ENCODE measurements at regions of chr16 and their contacts with region 1.

Region 1: GRCh38 chr16:69123910-69124309 is 8.5 kb downstream of the CHTF8 start:
- DNase-seq: no peak
- ATAC-seq: peak; percentile 83
- H3K4me3 ChIP-seq: no peak overlapping the region
- H3K27ac ChIP-seq: no peak overlapping the region
- H3K4me1 ChIP-seq: no peaks in the 10 kb centered on the region; the same call in 1 of the 2 replicates
- H3K27me3 ChIP-seq: no peaks in the 10 kb centered on the region
- CTCF ChIP-seq: peak; percentile 56 to 69 (median 57); a peak in 5 of 6 replicates
- EP300 ChIP-seq: no peak
- POLR2A ChIP-seq: no peak
- RAD21 ChIP-seq: peak; percentile 80

Region 2: DNA sequence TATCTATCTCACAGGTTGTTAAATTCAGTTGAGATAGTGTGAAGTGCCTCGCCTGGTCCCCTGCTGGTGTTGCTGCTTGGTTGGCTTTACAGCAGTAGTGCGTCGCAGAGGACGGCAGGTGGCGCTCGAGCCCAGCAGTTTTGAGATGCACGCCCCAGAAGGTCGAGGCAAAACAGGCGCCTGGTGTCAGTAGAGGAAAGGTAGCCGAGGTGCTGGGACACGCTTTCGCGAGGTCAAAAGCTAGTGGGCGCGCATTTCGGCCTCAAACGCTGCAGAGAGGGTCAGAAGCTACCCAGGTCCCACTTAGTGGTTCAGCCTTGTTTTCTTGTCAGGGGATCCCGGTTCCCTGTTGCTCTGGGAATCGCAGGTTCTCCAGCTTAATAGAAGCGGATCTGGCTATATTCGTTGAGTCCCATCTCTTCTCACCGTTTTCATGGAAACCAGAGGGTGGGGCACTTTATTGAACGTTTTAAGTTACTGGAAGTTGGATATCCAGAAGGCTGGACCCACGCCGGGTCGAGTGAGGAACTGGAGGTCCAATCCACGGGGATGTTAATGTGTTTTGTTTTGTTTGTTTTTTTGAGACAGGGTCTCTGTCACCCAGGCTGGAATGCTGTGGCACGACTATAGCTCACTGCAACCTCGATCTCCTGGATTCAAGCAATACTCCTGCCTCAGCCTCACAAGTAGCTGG is 595.1 kb before region 1 on chr16:
- CTCF ChIA-PET with region 1: interaction called, 33 read pairs
- POLR2A ChIA-PET with region 1: no interaction called
- RAD21 ChIA-PET with region 1: interaction called, 8 read pairs
- SMC1A ChIA-PET with region 1: interaction called, 3 read pairs
- in situ Hi-C with region 1: loop called (anchors 5 kb)
- intact Hi-C with region 1: loop called (anchors 2 kb)
- DNase-seq: peak; percentile 39
- ATAC-seq: peak; percentile 90
- H3K4me3 ChIP-seq: no peak overlapping the region
- H3K27ac ChIP-seq: no peak overlapping the region
- H3K4me1 ChIP-seq: peaks cover 7% of the 10 kb centered on the region
- H3K27me3 ChIP-seq: no peaks in the 10 kb centered on the region
- CTCF ChIP-seq: peak; percentile 95 to 98 (median 96); a peak in 5 of 6 replicates
- EP300 ChIP-seq: no peak
- POLR2A ChIP-seq: no peak
- RAD21 ChIP-seq: peak; percentile 96

Region 3: GRCh38 chr16:68843482-68844210 is 280.3 kb before region 1 on chr16 and contains the start of gene TANGO6:
- CTCF ChIA-PET with region 1: interaction called, 55 read pairs
- POLR2A ChIA-PET with region 1: interaction called, 7 read pairs
- RAD21 ChIA-PET with region 1: interaction called, 26 read pairs
- SMC1A ChIA-PET with region 1: interaction called, 20 read pairs
- in situ Hi-C with region 1: loop called (anchors 5 kb)
- intact Hi-C with region 1: loop called (anchors 5 kb)
- DNase-seq: peak; percentile 41
- ATAC-seq: peak; percentile 95
- H3K4me3 ChIP-seq: peak within 1 kb of the TSS; percentile 88
- H3K27ac ChIP-seq: peak within 1 kb of the TSS; percentile 91
- H3K4me1 ChIP-seq: peaks cover 9% of the 10 kb centered on the region
- H3K27me3 ChIP-seq: no peaks in the 10 kb centered on the region
- CTCF ChIP-seq: peak; percentile 36 to 43 (median 38); a peak in 4 of 6 replicates
- EP300 ChIP-seq: no peak
- POLR2A ChIP-seq: peak; percentile 97
- RAD21 ChIP-seq: no peak
- polyA plus RNA-seq, gene TANGO6: 1.1 to 2.0 TPM

Region 4: DNA sequence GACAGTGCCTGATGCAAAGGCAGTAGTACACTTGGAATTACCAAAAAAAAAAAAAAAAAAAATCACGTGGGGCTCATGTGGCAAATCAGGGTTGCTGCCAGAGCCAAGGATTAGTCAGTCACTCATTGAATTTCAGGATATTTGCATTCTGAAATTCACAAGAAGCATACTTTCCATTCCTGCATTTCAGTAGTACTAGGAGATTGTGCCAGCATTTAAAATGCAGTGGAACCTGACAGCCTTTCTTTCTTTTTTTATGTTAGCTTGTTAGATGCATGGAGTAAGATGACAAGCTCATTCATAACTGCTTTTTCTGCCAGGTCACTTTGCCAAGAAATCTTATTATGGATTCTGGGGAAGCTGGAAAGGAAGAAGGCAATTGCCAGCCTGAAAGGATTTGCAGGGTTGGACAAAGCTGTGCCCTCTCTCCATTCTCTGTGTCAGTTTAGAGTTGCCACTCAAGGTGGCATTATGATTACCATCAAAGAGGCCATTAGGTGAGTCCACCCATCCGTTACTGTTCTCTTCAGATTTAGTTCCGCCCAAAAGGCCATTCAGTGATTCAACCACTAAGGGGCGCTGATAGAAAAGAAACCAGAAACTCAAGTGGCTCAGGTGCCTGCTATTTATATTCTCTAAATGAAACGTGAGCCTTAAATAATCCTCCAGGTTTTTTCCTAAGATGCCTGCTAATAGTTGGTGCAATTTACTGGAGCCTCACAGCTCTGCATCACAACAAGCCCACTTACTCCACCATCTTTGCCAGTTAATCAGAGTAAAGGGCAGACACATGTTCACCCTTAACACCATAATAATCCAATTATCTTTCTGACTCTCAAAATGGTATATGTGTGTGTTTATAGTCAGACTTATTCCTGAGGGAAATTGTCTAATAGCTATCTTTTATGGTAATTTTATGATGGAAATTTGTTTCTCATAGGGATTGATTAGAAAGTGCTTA is 221.6 kb before region 1 on chr16:
- CTCF ChIA-PET with region 1: interaction called, 43 read pairs
- POLR2A ChIA-PET with region 1: interaction called, 6 read pairs
- RAD21 ChIA-PET with region 1: interaction called, 7 read pairs
- SMC1A ChIA-PET with region 1: interaction called, 27 read pairs
- in situ Hi-C with region 1: loop called (anchors 5 kb)
- intact Hi-C with region 1: loop called (anchors 1 kb)
- DNase-seq: no peak
- ATAC-seq: peak; percentile 68
- H3K4me3 ChIP-seq: no peak overlapping the region
- H3K27ac ChIP-seq: no peak overlapping the region
- H3K4me1 ChIP-seq: no peaks in the 10 kb centered on the region
- H3K27me3 ChIP-seq: no peaks in the 10 kb centered on the region
- CTCF ChIP-seq: peak; percentile 54 to 61 (median 54); a peak in 5 of 6 replicates
- EP300 ChIP-seq: no peak
- POLR2A ChIP-seq: no peak
- RAD21 ChIP-seq: peak; percentile 79

Region 5: GRCh38 chr16:68995011-68995504 is 128.9 kb before region 1 on chr16:
- CTCF ChIA-PET with region 1: interaction called, 12 read pairs
- POLR2A ChIA-PET with region 1: no interaction called
- RAD21 ChIA-PET with region 1: interaction called, 3 read pairs
- SMC1A ChIA-PET with region 1: interaction called, 12 read pairs
- in situ Hi-C with region 1: no loop called
- intact Hi-C with region 1: loop called (anchors 2 kb)
- DNase-seq: no peak
- ATAC-seq: peak; percentile 82
- H3K4me3 ChIP-seq: no peak overlapping the region
- H3K27ac ChIP-seq: no peak overlapping the region
- H3K4me1 ChIP-seq: peaks cover 2% of the 10 kb centered on the region; the same call in 1 of the 2 replicates
- H3K27me3 ChIP-seq: no peaks in the 10 kb centered on the region
- CTCF ChIP-seq: peak; percentile 35 to 39 (median 36); a peak in 5 of 6 replicates
- EP300 ChIP-seq: no peak
- POLR2A ChIP-seq: no peak
- RAD21 ChIP-seq: peak; percentile 35; the same call in 1 of the 2 replicates

Region 6: GRCh38 chr16:69363281-69363717 is 239.4 kb after region 1 on chr16:
- CTCF ChIA-PET with region 1: no interaction called
- POLR2A ChIA-PET with region 1: no interaction called
- RAD21 ChIA-PET with region 1: no interaction called
- SMC1A ChIA-PET with region 1: no interaction called
- in situ Hi-C with region 1: no loop called
- intact Hi-C with region 1: no loop called
- DNase-seq: no peak
- ATAC-seq: no peak
- H3K4me3 ChIP-seq: no peak overlapping the region
- H3K27ac ChIP-seq: no peak overlapping the region
- H3K4me1 ChIP-seq: no peaks in the 10 kb centered on the region
- H3K27me3 ChIP-seq: no peaks in the 10 kb centered on the region
- CTCF ChIP-seq: no peak
- EP300 ChIP-seq: no peak
- POLR2A ChIP-seq: no peak
- RAD21 ChIP-seq: no peak

Measured in GM12878 (cell line).